ENCODE measurements at regions of chr5 and their contacts with region 1.

Region 1: GRCh38 chr5:142597546-142598341 is 88.1 kb downstream of the FGF1 start:
- DNase-seq: no peak
- H3K4me3 ChIP-seq: no peak overlapping the region
- H3K27me3 ChIP-seq: no peaks in the 10 kb centered on the region
- CTCF ChIP-seq: peak; percentile 24; the same call in 1 of the 2 replicates

Region 2: GRCh38 chr5:142095651-142096330 is 502.0 kb before region 1 on chr5:
- CTCF ChIA-PET with region 1: no interaction called
- POLR2A ChIA-PET with region 1: no interaction called
- DNase-seq: no peak
- H3K4me3 ChIP-seq: no peak overlapping the region
- H3K27me3 ChIP-seq: no peaks in the 10 kb centered on the region
- CTCF ChIP-seq: no peak

Region 3: DNA sequence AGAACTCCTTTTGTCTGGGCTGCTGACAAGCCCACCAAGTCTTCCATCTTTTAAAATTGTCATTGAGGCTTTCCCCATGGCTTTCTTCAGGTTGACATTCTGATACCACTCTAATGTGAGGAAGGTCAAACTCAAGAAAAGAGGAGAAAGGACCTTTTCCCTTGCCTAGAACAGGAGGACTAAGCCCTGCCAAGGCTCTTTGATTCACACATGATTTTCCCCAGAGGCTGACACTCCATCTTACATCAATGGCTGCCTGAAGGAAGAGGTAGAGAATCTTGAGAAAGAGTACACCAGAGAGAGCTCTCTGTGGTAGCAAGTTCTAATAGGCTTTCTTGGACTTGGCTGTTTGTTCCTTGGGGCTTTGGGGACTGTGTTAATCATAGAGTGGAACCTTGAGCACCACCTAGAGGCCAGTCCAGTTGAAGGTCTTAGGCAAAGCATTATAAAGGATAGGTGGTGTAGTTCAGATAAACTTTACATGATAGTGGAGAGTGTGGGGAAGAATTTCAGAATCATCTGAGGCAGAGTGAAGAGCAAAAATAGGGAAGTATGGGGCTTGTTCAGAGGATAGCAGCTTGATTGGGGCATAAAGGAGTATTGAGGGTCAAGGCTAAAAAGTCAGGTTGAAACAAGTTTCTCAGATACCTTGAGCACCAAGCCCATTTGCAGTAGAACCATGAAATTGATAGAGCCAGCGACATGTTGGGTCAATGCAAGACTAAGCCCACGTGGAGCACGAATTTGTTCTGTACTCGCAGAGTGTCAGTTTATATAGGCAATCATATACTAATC is 452.4 kb before region 1 on chr5:
- CTCF ChIA-PET with region 1: no interaction called
- POLR2A ChIA-PET with region 1: no interaction called
- DNase-seq: no peak
- H3K4me3 ChIP-seq: no peak overlapping the region
- H3K27me3 ChIP-seq: no peaks in the 10 kb centered on the region
- CTCF ChIP-seq: peak; percentile 82

Region 4: GRCh38 chr5:142542906-142543305 is 54.8 kb before region 1 on chr5:
- CTCF ChIA-PET with region 1: no interaction called
- POLR2A ChIA-PET with region 1: no interaction called
- DNase-seq: no peak
- H3K4me3 ChIP-seq: no peak overlapping the region
- H3K27me3 ChIP-seq: no peaks in the 10 kb centered on the region
- CTCF ChIP-seq: peak; percentile 21; the same call in 1 of the 2 replicates

Region 5: GRCh38 chr5:142587354-142587965 is 10.3 kb before region 1 on chr5:
- CTCF ChIA-PET with region 1: interaction called, 12 read pairs
- POLR2A ChIA-PET with region 1: no interaction called
- DNase-seq: no peak
- H3K4me3 ChIP-seq: no peak overlapping the region
- H3K27me3 ChIP-seq: no peaks in the 10 kb centered on the region
- CTCF ChIP-seq: peak; percentile 60

Region 6: DNA sequence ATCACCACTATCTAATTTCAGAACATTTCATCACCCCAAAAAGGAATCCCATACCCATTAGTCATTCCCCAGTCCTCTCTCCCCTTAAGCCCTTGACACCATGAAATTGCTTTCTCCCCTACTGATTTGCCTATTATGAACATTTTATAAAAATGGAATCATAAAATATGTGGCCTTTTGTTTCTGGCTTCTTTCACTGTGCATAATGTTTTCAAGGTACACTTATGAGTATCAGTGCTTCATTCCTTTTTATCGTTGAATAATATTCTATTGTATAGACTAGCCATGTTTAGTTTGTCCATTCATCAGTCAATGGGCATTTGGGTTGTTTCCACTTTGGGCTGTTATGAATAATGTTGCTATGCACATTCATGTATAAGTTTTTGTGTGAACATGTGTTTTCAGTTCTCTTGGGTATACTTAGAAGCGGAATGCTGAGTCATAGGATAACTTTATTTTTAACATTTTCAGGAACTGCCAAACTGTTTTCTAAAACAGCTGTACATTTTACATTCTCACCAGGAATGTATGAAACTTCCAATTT is 128.5 kb after region 1 on chr5:
- CTCF ChIA-PET with region 1: no interaction called
- POLR2A ChIA-PET with region 1: no interaction called
- DNase-seq: peak; percentile 77
- H3K4me3 ChIP-seq: no peak overlapping the region
- H3K27me3 ChIP-seq: no peaks in the 10 kb centered on the region
- CTCF ChIP-seq: no peak

Measured in BJ (cell line).